ENCODE measurements at regions of chr5 and their contacts with region 1.

Region 1: GRCh38 chr5:81779125-81779915 is 28.4 kb upstream of the SSBP2 start:
- DNase-seq: peak; percentile 4 to 67 (median 30)
- ATAC-seq: peak; percentile 68
- H3K4me3 ChIP-seq: peak overlapping the region; percentile 42
- H3K4me3 Mint-ChIP-seq: peak overlapping the region; percentile 90
- H3K27ac ChIP-seq: peak overlapping the region; percentile 65 to 70
- H3K27ac Mint-ChIP-seq: peak overlapping the region; percentile 95
- H3K4me1 ChIP-seq: peaks cover 18% of the 10 kb centered on the region
- H3K4me1 Mint-ChIP-seq: peaks cover 35% of the 10 kb centered on the region
- H3K27me3 ChIP-seq: no peaks in the 10 kb centered on the region
- H3K27me3 Mint-ChIP-seq: no peaks in the 10 kb centered on the region
- CTCF ChIP-seq: no peak

Region 2: DNA sequence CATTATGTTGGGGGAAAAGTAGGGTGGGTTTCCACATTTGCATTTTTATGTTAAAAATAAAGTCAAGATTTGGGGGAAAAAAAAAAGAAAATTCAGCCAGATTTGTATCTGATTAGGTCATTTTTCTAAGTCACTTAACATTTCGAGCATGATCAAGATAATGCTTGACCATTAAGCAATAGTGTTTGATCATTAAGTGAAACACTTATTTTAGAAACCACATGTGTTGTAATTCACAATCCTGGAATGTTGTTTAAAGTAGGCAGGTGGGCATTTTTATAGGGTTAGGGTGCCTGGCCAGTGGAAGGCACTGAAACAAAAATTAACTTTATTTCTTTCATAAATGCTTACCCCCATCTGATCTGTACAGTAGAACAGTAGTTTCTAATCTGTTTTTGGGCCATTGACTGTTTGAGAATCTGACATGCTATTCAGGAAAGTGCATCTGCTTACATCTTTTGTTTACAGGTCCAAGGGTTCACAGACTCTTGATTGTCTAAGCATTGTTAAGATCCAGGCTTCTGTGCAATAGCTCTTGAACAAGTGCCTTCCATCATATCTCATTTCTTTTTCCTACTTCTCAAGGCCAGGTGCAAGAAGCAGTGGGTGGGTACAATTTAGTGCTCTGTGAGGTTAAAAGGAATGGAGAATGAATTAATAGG is 468.8 kb before region 1 on chr5:
- CTCF ChIA-PET with region 1: no interaction called
- POLR2A ChIA-PET with region 1: no interaction called
- intact Hi-C with region 1: no loop called
- DNase-seq: no peak
- ATAC-seq: no peak
- H3K4me3 ChIP-seq: no peak overlapping the region
- H3K4me3 Mint-ChIP-seq: no peak overlapping the region
- H3K27ac ChIP-seq: no peak overlapping the region
- H3K27ac Mint-ChIP-seq: no peak overlapping the region
- H3K4me1 ChIP-seq: no peaks in the 10 kb centered on the region
- H3K4me1 Mint-ChIP-seq: peaks cover 4% of the 10 kb centered on the region
- H3K27me3 ChIP-seq: no peaks in the 10 kb centered on the region
- H3K27me3 Mint-ChIP-seq: no peaks in the 10 kb centered on the region
- CTCF ChIP-seq: no peak

Region 3: DNA sequence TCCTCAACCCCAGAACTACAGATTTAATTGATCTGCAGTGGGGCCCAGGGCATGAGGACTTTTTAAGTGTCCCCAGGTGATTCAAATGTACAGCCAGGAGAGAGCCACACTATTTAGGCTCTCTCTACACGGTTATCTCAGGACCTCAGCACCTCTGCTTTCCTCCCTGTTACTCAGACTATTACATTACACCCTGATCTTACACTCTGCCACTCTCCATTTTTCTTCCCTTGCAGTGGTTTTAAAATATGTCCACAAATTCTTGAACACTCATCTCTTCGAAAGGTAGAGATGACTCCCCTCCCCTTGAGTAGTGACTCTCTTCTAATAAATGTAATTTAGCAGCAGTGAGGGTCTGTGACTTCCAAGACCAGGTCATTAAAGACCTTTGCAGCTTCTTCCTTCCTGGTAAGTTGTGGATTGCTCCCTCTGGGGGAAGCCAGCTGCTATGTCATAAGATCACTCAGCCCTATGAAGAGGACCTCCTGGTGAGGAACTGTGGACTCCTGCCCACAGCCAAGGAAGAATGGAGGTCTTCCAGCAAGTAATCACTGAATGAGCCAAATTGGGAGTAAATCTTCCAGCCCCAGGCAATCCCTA is 59.1 kb after region 1 on chr5:
- CTCF ChIA-PET with region 1: interaction called, 3 read pairs
- POLR2A ChIA-PET with region 1: interaction called, 10 read pairs
- intact Hi-C with region 1: loop called in 1 of 2 experiments (anchors 5 kb)
- DNase-seq: peak in 8 of 14 experiments; percentile 15 to 71 (median 40)
- ATAC-seq: peak; percentile 94
- H3K4me3 ChIP-seq: no peak overlapping the region
- H3K4me3 Mint-ChIP-seq: no peak overlapping the region
- H3K27ac ChIP-seq: no peak overlapping the region
- H3K27ac Mint-ChIP-seq: no peak overlapping the region
- H3K4me1 ChIP-seq: peaks cover 8% of the 10 kb centered on the region
- H3K4me1 Mint-ChIP-seq: peaks cover 9% of the 10 kb centered on the region
- H3K27me3 ChIP-seq: no peaks in the 10 kb centered on the region
- H3K27me3 Mint-ChIP-seq: no peaks in the 10 kb centered on the region
- CTCF ChIP-seq: peak; percentile 76